ENCODE measurements at regions of chr6 and their contacts with region 1.

Region 1: DNA sequence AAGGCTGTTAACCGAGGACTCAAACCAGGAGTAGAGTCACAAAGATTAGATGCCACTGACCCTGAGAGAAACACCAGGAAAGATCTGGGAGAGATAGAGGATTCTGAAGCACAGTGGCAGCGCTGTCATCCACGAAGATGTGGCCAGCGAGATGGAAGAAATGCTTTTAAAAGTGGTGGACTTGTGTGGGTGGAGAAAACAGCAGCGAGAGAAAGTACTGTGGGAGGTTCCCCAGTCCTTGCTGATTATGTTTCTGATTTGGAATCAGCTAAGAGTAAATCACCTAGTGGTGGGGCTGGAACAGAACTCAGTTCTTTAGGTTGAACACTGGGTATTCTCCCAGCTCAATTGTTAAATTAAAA is 435 bp upstream of the ZNF322 start:
- DNase-seq: peak; percentile 23
- ATAC-seq: peak; percentile 40
- H3K4me3 ChIP-seq: peak overlapping the region; percentile 75
- H3K27ac ChIP-seq: no peak overlapping the region
- H3K4me1 ChIP-seq: peaks cover 14% of the 10 kb centered on the region; the same call in 1 of the 2 replicates
- H3K27me3 ChIP-seq: peaks cover 13% of the 10 kb centered on the region; the same call in 1 of the 2 replicates
- CTCF ChIP-seq: peak; percentile 31; the same call in 1 of the 2 replicates

Region 2: DNA sequence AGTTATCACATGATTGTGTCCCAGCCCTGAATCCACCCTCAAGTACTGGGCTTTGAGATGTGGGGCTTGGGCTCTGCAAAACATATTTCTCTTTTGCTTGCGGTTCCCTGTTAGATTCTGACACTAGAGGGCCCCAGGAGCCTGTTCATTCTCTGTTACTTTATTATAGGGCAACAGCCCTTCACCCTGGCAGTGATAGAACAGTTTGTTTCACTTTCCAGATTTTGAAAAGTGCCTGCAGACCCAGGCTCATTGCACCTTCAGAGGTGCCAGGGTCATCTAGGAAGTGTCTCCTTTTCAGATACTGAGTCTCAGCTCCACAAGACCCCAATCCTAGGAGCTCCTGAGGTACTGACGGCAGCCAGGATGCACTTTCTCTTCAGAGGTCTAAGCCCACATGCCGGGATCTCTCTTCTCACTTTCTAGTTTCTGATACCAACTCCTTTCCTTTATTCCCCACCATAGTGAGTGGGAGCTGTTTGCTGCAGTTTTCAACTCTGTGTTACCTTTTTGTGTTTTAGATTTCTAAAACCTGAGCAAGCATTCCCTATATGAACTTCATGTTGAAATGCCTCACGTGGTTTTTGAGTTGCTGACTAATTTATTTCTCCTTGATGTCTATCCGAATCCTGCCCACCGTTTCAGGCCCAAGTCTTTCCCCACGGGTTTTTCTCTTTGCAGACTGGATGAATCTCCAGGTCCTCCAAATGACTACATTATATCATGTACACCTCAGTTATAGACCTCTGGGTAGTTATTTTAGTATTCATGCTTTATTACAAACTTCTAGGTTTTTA is 52.3 kb before region 1 on chr6:
- CTCF ChIA-PET with region 1: no interaction called
- POLR2A ChIA-PET with region 1: no interaction called
- intact Hi-C with region 1: loop called (anchors 1 kb)
- DNase-seq: peak; percentile 78
- ATAC-seq: peak; percentile 94
- H3K4me3 ChIP-seq: peak overlapping the region; percentile 72
- H3K27ac ChIP-seq: no peak overlapping the region
- H3K4me1 ChIP-seq: peaks cover 5% of the 10 kb centered on the region
- H3K27me3 ChIP-seq: no peaks in the 10 kb centered on the region
- CTCF ChIP-seq: peak; percentile 92

Measured in PC-3 (cell line).